AG04450 (cell line): ENCODE measurements at regions of chr12 and their contacts with region 1.

Region 1: DNA sequence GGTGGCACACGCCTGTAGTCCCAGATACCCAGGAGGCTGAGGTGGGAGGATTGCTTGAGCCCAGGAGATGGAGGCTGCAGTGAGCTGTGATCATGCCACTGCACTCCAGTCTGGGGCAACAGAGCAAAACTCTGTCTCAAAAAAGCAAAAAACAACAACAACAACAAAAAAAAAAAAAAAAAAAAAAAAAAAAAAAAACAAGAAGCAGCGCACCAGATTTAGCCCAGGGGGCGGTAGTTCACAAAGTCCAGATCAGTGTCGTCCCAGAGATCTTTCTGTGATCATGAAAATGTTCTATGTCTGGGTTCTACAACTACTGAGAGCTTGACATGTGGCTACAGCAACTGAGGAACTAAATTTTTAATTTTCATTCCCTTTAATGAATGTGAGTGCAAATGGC is 27.4 kb downstream of the OAS2 start:
- DNase-seq: no peak
- H3K4me3 ChIP-seq: no peak overlapping the region
- H3K27ac ChIP-seq: no peak overlapping the region
- H3K27me3 ChIP-seq: peaks cover 6% of the 10 kb centered on the region
- CTCF ChIP-seq: peak; percentile 25; the same call in 1 of the 2 replicates

Region 2: GRCh38 chr12:112851024-112851777 is 154.6 kb before region 1 on chr12:
- CTCF ChIA-PET with region 1: interaction called, 12 read pairs
- POLR2A ChIA-PET with region 1: no interaction called
- DNase-seq: no peak
- H3K4me3 ChIP-seq: no peak overlapping the region
- H3K27ac ChIP-seq: no peak overlapping the region
- H3K27me3 ChIP-seq: peaks cover 5% of the 10 kb centered on the region
- CTCF ChIP-seq: no peak